Thyroid gland (tissue), 4 donors: ENCODE measurements at regions of chr2 and their contacts with region 1.

Region 1: DNA sequence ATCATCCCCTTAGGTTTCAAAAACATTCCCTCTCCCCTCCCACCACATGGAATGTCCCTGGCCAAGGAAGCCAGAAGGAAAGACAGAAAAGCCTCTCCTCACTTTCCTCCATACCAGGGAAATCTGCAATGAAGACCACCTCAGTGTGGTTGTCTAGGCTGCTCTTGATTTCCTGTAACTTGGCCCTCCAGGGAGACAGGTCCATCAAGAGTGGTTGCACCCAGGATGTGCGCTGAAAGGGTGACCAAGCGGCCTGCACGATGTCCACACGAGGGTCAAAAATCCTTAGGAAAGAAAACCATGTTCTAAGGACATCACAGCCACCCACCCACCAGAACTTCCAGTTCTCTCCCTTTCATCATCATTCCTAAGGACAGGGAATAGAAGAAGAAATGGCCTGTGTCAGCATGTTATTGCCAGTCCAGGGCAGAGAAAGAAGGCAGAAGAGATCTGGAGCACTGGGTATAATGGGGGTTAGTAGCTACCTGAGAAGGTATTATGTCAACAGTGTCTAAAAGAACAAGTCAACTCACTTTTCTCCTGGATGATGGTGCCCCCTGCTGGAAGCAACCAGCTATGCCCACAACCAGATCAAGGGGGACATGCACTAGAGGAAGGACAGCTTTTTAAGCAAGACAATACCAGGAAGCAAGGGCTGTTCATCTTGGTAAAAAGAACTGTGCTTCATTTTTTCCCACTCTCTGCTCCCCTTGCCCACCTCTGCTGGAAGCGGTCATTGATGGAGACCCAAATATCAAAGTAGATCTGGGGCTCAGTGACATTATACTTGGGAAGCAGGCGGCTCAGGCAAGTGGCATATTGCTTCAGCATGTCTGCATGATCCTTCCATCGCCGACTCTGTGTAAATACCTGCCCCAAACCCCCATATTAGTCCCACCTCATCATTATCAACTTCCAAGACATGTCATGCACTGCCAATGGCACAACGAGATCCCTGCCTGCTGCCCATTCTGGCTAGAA is 9.3 kb downstream of the GGCX start:
- DNase-seq: peak; percentile 87 to 92
- H3K4me3 ChIP-seq: no peak overlapping the region
- H3K27ac ChIP-seq: peak overlapping the region in 2 of 3 donors; percentile 8 to 29
- H3K4me1 ChIP-seq: peaks cover 3 to 4% of the 10 kb centered on the region in 2 donors
- H3K27me3 ChIP-seq: no peaks in the 10 kb centered on the region
- CTCF ChIP-seq: peak; percentile 74 to 98 (median 92)
- POLR2A ChIP-seq: no peak

Region 2: GRCh38 chr2:85266146-85267041 is 285.6 kb before region 1 on chr2:
- intact Hi-C with region 1: no loop called
- DNase-seq: peak; percentile 64 to 67
- H3K4me3 ChIP-seq: no peak overlapping the region
- H3K27ac ChIP-seq: peak overlapping the region in 1 of 3 donors; percentile 2
- H3K4me1 ChIP-seq: peaks cover 26 to 45% of the 10 kb centered on the region in 2 donors
- H3K27me3 ChIP-seq: no peaks in the 10 kb centered on the region
- CTCF ChIP-seq: peak in 5 of 6 experiments; percentile 51 to 80 (median 56)
- POLR2A ChIP-seq: no peak

Region 3: DNA sequence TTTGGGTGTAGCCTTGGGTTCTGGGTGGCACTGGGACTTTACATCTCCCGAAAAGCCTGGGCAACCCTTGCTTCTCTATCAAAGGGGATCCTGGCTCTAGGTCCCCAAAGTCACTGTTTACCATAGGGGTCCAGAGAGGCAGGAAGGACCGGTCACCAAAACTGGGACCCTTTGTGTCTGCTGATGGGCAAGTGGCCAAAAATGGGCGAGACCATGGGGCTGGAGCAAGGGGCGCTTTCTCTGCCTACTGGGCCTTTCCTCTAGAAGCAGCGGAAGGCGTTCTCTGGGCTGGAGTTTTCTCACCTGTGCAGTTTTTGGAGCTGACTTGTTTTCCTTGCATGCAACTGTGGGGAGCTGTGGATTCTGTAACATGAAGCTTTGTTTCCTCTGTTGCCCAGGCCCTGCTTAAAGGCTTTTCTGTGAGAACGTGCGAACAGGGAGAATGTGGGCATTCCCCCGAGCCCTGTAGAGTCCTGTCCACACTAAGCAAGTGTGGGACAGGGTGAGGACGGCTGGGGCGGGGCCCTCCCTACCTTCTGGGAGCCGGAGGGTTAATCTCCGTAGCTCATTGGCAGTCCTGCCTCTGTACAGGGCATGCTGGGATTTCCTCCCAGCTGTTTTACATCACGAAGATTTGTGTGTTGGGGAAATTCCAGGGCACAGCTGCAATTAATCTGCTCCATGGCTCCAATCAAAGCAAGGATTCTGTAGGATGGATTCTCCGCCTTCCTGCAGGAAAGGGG is 274.4 kb before region 1 on chr2:
- intact Hi-C with region 1: no loop called
- DNase-seq: no peak
- H3K4me3 ChIP-seq: no peak overlapping the region
- H3K27ac ChIP-seq: peak overlapping the region in 2 of 3 donors; percentile 27 to 41
- H3K4me1 ChIP-seq: peaks cover 30 to 44% of the 10 kb centered on the region in 2 donors
- H3K27me3 ChIP-seq: no peaks in the 10 kb centered on the region
- CTCF ChIP-seq: no peak
- POLR2A ChIP-seq: no peak

Region 4: DNA sequence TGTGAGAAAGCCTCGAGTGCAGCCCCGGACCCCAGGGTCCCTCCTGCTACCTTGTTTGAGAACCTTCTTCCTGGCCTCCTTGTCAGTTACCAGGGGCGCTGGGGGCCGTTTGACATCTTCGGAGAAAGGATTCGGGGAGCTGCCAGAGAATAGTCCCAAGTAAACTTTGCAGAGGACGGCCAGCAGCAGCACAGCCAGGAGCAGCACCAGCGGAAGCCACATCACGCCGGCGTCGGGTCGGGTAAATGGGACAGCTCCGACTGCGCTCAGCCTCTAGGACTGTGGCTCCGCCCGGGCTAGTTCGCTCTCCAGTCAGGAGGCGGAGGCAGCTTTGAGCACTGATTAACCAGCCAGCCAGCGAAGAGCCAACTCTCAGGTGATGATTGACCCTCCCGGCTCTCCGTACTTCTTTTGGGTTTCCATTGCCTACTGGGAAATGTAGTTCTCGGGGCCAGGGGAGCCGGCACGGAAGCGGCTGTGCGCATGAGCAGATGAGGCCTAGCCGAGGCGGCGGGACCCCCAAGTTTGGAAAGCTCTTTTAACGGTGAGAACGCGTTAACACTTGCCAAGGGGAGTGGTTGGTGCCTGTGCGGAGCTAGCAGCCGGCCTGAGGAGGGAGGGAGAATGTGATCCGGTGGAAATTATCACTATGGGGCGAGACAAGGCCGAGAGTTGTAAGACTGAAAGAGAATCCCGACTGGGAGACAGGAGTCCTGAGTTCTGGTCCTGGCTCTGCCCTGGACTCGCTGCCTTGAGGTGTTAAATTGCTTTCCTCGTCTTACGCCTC is 197.5 kb before region 1 on chr2 and contains the starts of genes ELMOD3 and RETSAT:
- intact Hi-C with region 1: loop called (anchors 5 kb)
- DNase-seq: peak; percentile 98
- H3K4me3 ChIP-seq: peak within 1 kb of the TSS; percentile 65 to 96 (median 91)
- H3K27ac ChIP-seq: peak within 1 kb of the TSS; percentile 77 to 89 (median 80)
- H3K4me1 ChIP-seq: peaks cover 13 to 35% of the 10 kb centered on the region in 2 donors
- H3K27me3 ChIP-seq: no peaks in the 10 kb centered on the region
- CTCF ChIP-seq: peak in 1 of 6 experiments; percentile 15
- POLR2A ChIP-seq: peak; percentile 80 to 96
- total RNA-seq, gene ELMOD3: 23.4 to 34.5 (median 31.4) TPM
- total RNA-seq, gene RETSAT: 88.2 to 253 (median 182) TPM

Region 5: DNA sequence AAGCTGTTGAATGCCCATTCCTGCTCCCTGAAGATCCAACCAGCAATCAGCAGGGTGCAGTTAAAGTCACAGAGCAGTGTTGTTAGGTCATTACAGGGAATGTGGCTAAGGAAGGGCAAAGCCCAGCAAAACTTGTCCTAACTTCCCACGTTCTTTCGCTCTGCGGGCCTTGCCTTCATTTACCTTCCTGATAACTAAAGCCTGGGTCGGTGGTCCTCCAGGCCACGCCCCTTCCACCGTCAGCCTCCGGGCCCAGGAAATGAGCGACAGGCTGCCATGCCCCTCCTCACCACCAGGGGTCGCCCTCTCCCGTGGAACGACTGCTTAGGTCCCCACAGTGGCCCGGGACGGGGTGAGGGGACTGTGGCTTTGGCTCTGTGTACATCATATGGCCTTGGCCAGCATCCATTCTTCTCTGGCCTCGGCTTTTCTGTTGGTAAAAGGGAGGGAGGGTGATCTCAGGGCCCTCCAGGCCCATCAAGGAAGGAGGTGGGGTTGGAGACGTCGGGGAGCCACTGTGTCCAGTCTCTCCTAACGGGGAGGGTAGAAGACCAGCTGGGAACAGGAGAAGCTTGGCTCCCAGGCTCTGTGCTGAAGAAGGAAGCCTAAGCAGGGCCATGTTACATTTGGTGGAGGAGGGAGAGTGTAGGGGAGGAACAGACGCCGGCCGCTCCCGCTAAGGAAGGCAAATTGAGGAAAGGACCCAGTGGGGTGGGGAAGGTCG is 131.3 kb before region 1 on chr2:
- intact Hi-C with region 1: loop called (anchors 2 kb)
- DNase-seq: peak; percentile 88 to 91
- H3K4me3 ChIP-seq: no peak overlapping the region
- H3K27ac ChIP-seq: peak overlapping the region; percentile 97 to 98 (median 98)
- H3K4me1 ChIP-seq: peaks cover 46 to 56% of the 10 kb centered on the region in 2 donors
- H3K27me3 ChIP-seq: no peaks in the 10 kb centered on the region
- CTCF ChIP-seq: peak; percentile 99 to 100 (median 100)
- POLR2A ChIP-seq: no peak

Region 6: GRCh38 chr2:85433511-85434089 is 118.4 kb before region 1 on chr2:
- intact Hi-C with region 1: loop called (anchors 5 kb)
- DNase-seq: peak; percentile 93 to 94
- H3K4me3 ChIP-seq: no peak overlapping the region
- H3K27ac ChIP-seq: peak overlapping the region; percentile 77 to 99 (median 90)
- H3K4me1 ChIP-seq: peaks cover 72 to 82% of the 10 kb centered on the region in 2 donors
- H3K27me3 ChIP-seq: no peaks in the 10 kb centered on the region
- CTCF ChIP-seq: peak in 1 of 6 experiments; percentile 22
- POLR2A ChIP-seq: peak in 1 of 2 donors; percentile 61